RWPE1 (cell line): ENCODE measurements at regions of chr2 and their contacts with region 1.

Region 1: GRCh38 chr2:227238238-227239237 is 74.1 kb downstream of the COL4A3 start:
- DNase-seq: peak; percentile 45
- H3K27ac ChIP-seq: no peak overlapping the region
- CTCF ChIP-seq: peak; percentile 96

Region 2: DNA sequence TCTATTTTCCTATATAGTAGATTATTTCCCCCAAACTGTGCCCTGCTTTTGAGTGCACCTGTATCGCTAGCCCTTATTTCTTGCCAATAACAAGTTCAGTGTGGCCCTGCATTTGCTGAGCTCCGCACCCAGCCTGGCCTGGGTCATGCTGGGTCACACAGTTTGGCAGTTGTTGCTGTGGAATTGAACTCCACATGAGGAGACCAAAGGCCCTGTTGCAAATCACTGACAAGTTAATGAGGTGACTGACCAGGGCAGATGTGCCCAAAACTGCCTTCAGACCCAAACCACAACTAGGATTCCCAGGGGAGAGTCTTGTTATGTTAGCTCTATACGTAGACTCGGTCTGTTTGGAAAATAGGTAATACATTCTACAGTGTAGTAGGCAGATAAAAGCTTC is 105.6 kb before region 1 on chr2:
- CTCF ChIA-PET with region 1: interaction called, 22 read pairs
- POLR2A ChIA-PET with region 1: no interaction called
- DNase-seq: no peak
- H3K27ac ChIP-seq: no peak overlapping the region
- CTCF ChIP-seq: no peak

Region 3: GRCh38 chr2:227177592-227178336 is 60.8 kb before region 1 on chr2:
- CTCF ChIA-PET with region 1: no interaction called
- POLR2A ChIA-PET with region 1: no interaction called
- DNase-seq: no peak
- H3K27ac ChIP-seq: no peak overlapping the region
- CTCF ChIP-seq: no peak